ENCODE measurements at regions of chr1 and their contacts with region 1.

Region 1: DNA sequence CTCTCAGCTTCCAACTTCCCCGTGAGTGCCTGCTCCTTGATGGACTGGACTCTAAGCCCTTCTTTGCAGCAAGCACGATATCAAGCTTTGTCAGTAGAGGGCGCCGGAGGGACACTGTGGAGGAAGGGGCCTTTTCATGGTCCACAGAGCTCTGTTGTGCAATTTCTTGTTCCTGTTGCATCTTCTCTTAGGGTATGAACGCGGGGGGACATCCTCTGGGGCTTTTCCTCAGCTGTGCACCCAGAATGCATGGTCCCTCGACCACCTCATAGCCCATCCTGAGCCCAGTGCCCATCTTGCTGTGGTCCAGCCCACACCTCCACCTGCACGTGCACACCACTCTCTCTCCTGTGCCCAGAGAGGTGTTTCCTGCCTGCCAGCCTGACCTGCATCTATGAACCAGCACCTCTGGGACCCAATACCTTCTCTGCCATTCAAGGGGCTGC is 556.8 kb downstream of the PTPRU start:
- DNase-seq: no peak
- ATAC-seq: peak; percentile 62

Region 2: DNA sequence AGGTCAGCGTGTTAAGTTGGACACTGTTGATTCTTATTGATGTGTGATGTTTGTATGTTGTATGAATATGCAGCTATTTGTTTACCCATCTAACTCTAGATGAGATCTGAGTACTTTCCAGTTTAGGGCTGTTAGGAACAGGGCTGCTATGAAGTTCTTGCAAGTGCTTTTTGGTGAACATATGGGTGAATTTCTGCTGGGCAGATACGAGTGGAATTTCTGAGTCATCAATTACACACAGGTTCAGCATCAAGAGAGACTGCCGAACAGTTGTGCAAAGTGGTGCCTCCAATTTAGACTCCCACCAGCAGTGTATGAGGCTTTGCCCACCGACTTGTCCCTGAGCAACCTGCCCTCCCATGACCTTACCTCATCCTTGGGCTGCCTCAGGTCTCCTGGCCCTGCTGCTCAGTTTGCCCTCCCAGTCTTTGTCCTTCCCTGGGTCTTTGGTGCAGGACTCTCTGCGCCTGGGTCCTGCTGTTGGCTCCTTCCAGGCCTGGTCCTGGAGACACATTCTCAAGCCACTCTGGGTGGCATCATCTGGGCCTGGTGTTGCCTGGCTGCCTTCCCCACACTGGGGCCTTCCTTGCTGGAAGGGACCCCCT is 213.2 kb before region 1 on chr1:
- intact Hi-C with region 1: no loop called
- DNase-seq: no peak
- ATAC-seq: no peak

Region 3: DNA sequence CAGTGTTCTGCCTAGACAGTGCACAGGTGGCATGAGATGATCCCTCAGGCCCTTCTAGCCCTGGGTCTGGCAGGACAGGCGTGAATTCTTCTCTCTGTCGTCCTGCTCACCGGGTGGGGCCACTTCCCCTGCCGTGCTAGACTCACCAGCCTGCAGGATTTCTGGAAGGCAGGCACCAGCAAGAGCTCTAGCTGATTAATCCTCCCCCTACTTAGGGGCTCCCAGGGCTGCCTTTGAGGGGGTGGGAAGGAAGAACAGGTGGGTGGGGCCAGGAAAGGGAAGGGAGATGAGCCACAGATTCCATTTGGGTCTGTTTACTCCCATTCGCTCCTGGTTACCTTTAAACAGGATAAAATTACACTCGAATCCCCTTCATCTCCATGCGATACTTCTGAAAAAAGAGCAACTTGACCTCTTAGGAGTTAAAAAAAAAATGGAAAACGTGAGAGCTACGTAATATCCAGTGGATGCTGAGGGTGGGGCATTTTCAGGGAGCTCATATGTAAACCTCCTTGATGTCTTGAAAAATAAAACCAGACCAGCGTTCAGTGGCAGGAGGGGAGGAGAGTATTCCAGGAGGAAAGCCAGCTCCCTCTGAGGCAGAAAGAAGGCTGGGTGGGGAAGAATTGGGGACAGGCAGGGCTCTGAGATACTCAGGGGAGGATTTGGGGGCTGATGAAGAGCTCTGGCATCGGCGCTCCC is 108.7 kb after region 1 on chr1:
- intact Hi-C with region 1: no loop called
- DNase-seq: no peak
- ATAC-seq: no peak

Region 4: DNA sequence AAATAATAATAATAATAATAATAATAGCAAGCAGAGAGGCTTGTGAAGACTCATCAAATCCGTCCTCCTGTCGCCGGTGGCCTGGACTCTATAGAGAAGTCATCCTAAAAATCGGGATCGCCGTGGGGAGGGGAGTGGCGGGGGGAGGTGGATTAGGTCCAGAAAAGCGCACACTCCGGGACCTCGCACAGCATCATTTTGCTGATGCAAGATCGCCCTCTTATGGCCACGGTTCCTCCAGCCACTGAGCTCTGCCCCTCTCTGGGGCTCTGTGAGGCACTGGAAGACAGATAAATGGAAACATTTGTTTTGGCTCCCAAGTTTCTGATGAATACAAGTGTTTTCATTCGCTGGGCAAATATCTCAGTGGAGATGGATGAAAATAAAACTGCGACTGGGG is 318.3 kb after region 1 on chr1:
- intact Hi-C with region 1: loop called (anchors 5 kb)
- DNase-seq: no peak
- ATAC-seq: peak; percentile 62

Region 5: DNA sequence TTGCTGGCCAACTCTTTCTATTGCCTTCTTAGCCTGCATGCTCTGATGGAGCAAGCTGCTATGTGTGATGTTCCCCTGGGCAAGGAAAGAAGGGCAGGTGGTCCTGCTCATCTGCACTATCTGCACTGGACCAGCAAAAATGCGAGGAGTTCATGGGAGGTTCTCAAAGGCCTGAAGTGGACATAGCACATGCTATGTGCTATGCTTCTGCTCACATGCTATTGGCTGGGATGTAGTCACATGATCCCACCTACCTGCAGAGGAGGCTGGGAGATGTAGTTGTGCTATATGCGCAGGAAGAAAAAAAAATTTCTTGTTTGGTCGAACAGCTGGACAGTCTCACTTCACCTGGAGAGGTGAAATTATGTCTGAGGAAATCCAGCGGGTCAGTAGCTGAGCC is 342.6 kb after region 1 on chr1:
- intact Hi-C with region 1: no loop called
- DNase-seq: no peak
- ATAC-seq: no peak

Measured in Right ventricle myocardium inferior (tissue), 1 donor.